BJ (cell line): ENCODE measurements at regions of chr9 and their contacts with region 1.

Region 1: GRCh38 chr9:127586537-127586936 is 25.5 kb upstream of the STXBP1 start:
- DNase-seq: no peak
- H3K4me3 ChIP-seq: no peak overlapping the region
- H3K27me3 ChIP-seq: no peaks in the 10 kb centered on the region
- CTCF ChIP-seq: peak; percentile 91

Region 2: GRCh38 chr9:127519301-127520166 is 67.0 kb before region 1 on chr9:
- CTCF ChIA-PET with region 1: interaction called, 40 read pairs
- POLR2A ChIA-PET with region 1: interaction called, 8 read pairs
- DNase-seq: peak; percentile 83
- H3K4me3 ChIP-seq: no peak overlapping the region
- H3K27me3 ChIP-seq: no peaks in the 10 kb centered on the region
- CTCF ChIP-seq: no peak

Region 3: DNA sequence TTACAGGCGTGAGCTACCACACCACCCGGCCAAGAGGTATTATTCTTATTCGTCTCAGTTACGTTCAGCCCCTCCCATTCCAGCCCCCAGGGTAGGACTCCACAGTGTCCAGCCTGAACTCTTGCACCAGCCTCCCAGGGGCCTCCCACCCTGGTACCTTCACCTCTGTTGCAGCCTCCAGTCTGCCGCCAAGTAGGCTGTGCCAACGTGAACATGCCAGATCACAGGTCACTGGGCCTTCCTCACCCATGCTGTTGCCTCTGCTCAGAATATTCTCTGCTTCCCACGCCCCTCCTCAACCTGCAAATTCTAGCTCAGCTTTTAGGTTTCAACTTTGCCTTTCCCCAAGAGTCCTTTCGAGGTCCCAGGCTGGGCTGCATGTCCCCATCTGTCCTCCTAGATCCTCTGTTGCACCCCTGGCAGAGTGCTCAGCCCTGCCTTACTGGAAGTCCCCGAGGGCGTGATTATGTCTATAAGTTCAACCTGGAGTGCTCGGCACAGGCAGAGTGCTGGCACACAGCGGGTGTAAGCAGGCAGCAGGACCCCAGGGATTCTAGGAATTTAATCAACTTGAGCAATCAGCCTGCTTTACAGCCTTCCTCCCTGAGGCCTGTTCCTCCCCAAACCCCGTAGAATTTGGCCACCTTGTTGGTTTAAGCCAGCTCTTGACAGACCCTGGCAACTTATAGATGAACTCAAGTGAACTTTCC is 12.5 kb after region 1 on chr9:
- CTCF ChIA-PET with region 1: interaction called, 19 read pairs
- POLR2A ChIA-PET with region 1: no interaction called
- DNase-seq: no peak
- H3K4me3 ChIP-seq: no peak overlapping the region
- H3K27me3 ChIP-seq: no peaks in the 10 kb centered on the region
- CTCF ChIP-seq: no peak

Region 4: GRCh38 chr9:127637322-127637847 is 50.8 kb after region 1 on chr9:
- CTCF ChIA-PET with region 1: no interaction called
- POLR2A ChIA-PET with region 1: no interaction called
- DNase-seq: peak; percentile 41
- H3K4me3 ChIP-seq: no peak overlapping the region
- H3K27me3 ChIP-seq: no peaks in the 10 kb centered on the region
- CTCF ChIP-seq: no peak

Region 5: GRCh38 chr9:127651697-127652610 is 65.4 kb after region 1 on chr9:
- CTCF ChIA-PET with region 1: no interaction called
- POLR2A ChIA-PET with region 1: no interaction called
- DNase-seq: no peak
- H3K4me3 ChIP-seq: no peak overlapping the region
- H3K27me3 ChIP-seq: no peaks in the 10 kb centered on the region
- CTCF ChIP-seq: no peak